Kidney (tissue), 22 donors: ENCODE measurements at regions of chr1 and their contacts with region 1.

Region 1: DNA sequence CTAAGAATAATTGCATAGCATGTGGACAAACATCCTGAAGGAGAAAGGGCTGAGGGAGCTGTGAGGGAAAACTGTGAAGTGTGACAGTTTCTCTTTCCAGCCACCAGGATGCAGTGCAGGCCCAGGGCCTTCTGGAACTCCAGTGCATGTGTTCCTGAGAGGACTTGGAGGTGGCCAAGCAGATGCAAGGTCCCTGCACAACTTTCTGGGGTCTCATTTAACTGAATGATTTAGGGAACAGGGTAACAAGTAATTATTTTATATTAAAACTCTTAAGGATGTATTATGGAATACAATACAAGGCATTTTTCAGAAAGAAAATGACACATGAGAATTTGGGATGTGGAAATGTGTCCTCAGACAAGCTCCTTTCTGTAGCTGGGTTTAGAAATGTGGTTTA is 61.2 kb upstream of the MCOLN3 start:
- DNase-seq: peak; percentile 62 to 79 (median 71)
- H3K4me3 ChIP-seq: no peak overlapping the region
- H3K27ac ChIP-seq: no peak overlapping the region
- H3K4me1 ChIP-seq: no peaks in the 10 kb centered on the region
- H3K27me3 ChIP-seq: no peaks in the 10 kb centered on the region
- CTCF ChIP-seq: peak; percentile 87

Region 2: GRCh38 chr1:84988588-84988987 is 120.9 kb before region 1 on chr1:
- intact Hi-C with region 1: no loop called
- DNase-seq: no peak
- H3K4me3 ChIP-seq: no peak overlapping the region
- H3K27ac ChIP-seq: no peak overlapping the region
- H3K4me1 ChIP-seq: no peaks in the 10 kb centered on the region
- H3K27me3 ChIP-seq: no peaks in the 10 kb centered on the region
- CTCF ChIP-seq: no peak

Region 3: DNA sequence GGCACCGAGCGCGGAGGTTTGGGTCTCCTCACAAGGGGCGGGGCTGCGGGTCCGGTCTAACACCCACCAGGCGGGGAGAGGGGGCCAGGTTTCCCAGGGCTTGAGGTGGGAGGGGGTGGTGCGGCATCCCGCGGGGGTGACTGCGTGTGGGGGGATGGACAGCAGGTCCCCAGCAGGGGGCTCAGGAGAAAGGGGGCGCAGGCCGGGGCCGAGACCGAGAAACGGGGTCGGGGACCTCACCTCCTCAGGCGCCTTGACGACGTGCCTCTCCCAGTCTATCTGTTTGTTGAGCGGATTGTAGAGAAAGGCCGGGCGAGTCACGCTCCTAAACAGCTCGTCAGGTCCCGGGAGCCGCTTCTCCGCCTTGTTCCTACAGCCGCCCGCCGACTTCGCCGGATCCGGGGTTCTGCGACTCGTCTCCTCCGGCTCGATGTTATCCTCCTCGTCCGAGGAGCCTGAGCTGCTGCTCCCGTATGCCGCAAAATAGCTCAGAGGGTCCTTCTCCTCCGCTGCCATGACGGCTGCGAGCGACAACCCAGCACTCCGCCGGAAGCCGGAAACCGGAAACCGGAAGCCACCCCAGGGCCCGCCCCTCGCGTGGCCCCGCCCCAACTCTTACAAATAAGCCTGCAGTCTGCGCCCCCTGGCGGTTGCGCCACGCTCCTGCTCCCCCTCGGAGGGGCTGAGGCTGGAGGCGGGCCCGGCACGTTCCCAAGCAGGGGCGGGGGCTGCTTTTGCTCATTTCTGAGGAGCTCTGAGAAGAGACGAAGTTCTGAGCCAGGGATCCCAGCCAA is 149.8 kb after region 1 on chr1 and contains the start of gene C1orf52:
- intact Hi-C with region 1: loop called (anchors 5 kb)
- DNase-seq: peak; percentile 97 to 98 (median 98)
- H3K4me3 ChIP-seq: peak within 1 kb of the TSS; percentile 83 to 92 (median 88)
- H3K27ac ChIP-seq: peak within 1 kb of the TSS; percentile 63 to 66
- H3K4me1 ChIP-seq: peaks cover 0 to 17% (median 6%) of the 10 kb centered on the region in 3 donors
- H3K27me3 ChIP-seq: no peaks in the 10 kb centered on the region
- CTCF ChIP-seq: peak; percentile 95
- total RNA-seq, gene C1orf52: 18.7 TPM